ENCODE measurements at regions of chr19 and their contacts with region 1.

Region 1: DNA sequence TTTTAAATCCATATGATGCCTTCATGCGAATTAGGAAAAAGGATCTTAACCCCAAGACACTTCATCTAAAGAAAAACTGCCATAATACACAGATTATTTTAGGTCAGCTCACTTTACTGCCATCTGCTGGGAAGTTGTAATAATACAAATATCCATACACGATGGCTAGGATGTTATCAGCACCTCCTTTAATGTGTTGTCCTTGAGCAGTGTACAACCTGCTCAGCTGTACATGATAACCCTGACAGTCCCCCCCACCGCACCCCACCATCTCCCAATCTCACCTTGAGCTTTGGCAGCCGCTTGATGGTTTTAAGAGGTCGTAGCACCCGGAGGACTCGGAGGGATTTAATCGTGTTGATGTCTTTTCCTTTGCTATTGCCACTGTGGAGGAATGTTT is 112.2 kb downstream of the IER2 start:
- DNase-seq: peak; percentile 76
- ATAC-seq: peak; percentile 22
- H3K4me3 ChIP-seq: no peak overlapping the region
- H3K4me3 Mint-ChIP-seq: no peak overlapping the region
- H3K27ac ChIP-seq: no peak overlapping the region
- H3K27ac Mint-ChIP-seq: peak overlapping the region; percentile 67
- H3K4me1 ChIP-seq: peaks cover 16 to 20% of the 10 kb centered on the region in 2 donors
- H3K4me1 Mint-ChIP-seq: peaks cover 19% of the 10 kb centered on the region
- H3K27me3 ChIP-seq: peaks cover 0 to 7% (median 1%) of the 10 kb centered on the region in 4 experiments
- H3K27me3 Mint-ChIP-seq: peaks cover 15% of the 10 kb centered on the region
- CTCF ChIP-seq: peak; percentile 71

Region 2: DNA sequence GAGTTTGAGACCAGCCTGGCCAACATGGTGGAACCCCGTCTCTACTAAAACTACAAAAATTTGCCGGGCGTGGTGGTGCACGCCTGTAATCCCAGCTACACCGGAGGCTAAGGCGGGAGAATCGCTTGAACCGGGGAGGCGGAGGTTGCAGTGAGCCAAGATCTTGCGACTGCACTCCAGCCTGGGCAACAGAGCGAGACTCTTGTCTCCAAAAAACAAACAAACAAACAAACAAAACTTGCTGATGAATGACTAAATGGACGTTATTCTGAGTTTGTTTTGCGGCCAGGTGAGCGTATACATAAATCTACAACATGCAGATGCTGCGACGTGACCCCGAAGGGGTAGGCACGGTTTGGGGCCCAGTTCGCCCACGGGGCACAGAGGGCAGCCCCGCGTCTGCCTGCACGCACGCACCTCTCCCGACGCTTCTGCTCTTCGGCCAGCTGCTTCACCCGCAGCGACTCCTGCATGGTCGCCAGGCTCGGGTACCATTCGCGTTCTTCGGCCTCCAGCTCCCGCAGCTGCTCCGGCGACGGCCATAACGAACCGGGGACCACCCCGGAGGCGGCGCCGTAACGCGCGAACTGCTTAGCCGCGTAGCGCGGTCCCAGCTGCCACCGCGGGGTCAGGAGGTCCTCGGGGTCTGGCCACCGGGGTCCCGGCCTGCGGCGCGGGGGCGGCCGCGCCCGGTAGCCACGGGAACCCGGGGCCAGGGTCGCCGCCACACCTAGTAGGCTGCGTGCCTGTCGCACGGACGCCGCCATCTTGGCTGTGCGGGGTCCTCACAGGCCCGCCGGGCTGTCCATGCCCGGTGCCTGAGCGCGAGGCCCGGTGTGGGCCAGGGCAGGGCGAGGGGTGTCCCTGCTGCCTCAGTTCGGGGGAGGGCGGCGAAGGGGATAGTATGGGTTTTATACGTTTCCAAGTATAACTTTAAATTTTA is 305.7 kb before region 1 on chr19 and contains the start of gene GADD45GIP1:
- CTCF ChIA-PET with region 1: no interaction called
- POLR2A ChIA-PET with region 1: interaction called, 14 read pairs
- intact Hi-C with region 1: no loop called
- DNase-seq: peak; percentile 86
- ATAC-seq: peak; percentile 98
- H3K4me3 ChIP-seq: peak within 1 kb of the TSS; percentile 60 to 83 (median 65)
- H3K4me3 Mint-ChIP-seq: peak within 1 kb of the TSS; percentile 91
- H3K27ac ChIP-seq: peak within 1 kb of the TSS; percentile 75 to 90
- H3K27ac Mint-ChIP-seq: peak within 1 kb of the TSS; percentile 95
- H3K4me1 ChIP-seq: peaks cover 21 to 36% of the 10 kb centered on the region in 2 donors
- H3K4me1 Mint-ChIP-seq: peaks cover 30% of the 10 kb centered on the region
- H3K27me3 ChIP-seq: no peaks in the 10 kb centered on the region
- H3K27me3 Mint-ChIP-seq: peaks cover 2% of the 10 kb centered on the region
- CTCF ChIP-seq: no peak
- total RNA-seq, gene GADD45GIP1: 11.7 and 12.6 TPM in 2 replicates

Region 3: DNA sequence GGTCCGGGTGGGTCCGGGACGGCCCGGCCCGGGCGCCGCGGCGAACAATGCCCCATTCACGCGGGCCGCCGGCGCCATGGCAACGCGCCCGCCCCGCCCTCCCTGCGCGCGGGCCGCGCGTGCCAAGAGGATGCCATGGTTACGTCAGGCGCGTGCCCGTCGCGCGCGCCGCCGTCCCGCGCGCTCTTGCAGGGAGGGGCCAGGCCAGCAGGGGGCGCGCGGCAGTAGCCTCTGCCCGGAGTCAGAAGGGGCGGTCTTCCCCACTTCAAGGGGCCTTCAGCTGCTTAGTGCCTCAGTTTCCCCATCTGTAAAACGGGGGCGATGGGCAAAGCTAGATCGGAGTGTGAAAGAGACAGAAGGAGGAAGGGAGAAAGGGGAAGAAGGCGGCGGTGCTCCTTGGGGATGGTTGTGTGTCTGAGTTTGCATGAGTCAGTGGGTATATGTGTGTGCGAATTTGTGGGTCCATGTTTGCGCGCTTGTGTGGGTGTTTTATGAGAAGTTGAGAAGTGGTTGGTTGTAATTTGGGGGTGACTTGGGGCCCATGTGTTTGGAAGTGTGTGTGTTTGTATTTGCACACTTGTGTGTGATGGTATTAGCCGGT is 278.8 kb before region 1 on chr19:
- CTCF ChIA-PET with region 1: interaction called, 16 read pairs
- POLR2A ChIA-PET with region 1: no interaction called
- intact Hi-C with region 1: loop called (anchors 1 kb)
- DNase-seq: peak; percentile 93
- ATAC-seq: peak; percentile 77
- H3K4me3 ChIP-seq: peak overlapping the region in 4 of 5 experiments; percentile 24 to 62 (median 36)
- H3K4me3 Mint-ChIP-seq: no peak overlapping the region
- H3K27ac ChIP-seq: no peak overlapping the region
- H3K27ac Mint-ChIP-seq: no peak overlapping the region
- H3K4me1 ChIP-seq: peaks cover 30 to 43% of the 10 kb centered on the region in 2 donors
- H3K4me1 Mint-ChIP-seq: peaks cover 15% of the 10 kb centered on the region
- H3K27me3 ChIP-seq: peaks cover 0 to 10% (median 2%) of the 10 kb centered on the region in 4 experiments
- H3K27me3 Mint-ChIP-seq: peaks cover 4% of the 10 kb centered on the region
- CTCF ChIP-seq: peak; percentile 91

Region 4: GRCh38 chr19:13155472-13156359 is 106.7 kb before region 1 on chr19:
- CTCF ChIA-PET with region 1: interaction called, 31 read pairs
- POLR2A ChIA-PET with region 1: interaction called, 8 read pairs
- intact Hi-C with region 1: loop called (anchors 1 kb)
- DNase-seq: peak; percentile 98
- ATAC-seq: peak; percentile 53
- H3K4me3 ChIP-seq: peak overlapping the region; percentile 82 to 100 (median 98)
- H3K4me3 Mint-ChIP-seq: peak overlapping the region; percentile 92
- H3K27ac ChIP-seq: peak overlapping the region; percentile 94 to 96
- H3K27ac Mint-ChIP-seq: peak overlapping the region; percentile 100
- H3K4me1 ChIP-seq: peaks cover 44 to 62% of the 10 kb centered on the region in 2 donors
- H3K4me1 Mint-ChIP-seq: peaks cover 42% of the 10 kb centered on the region
- H3K27me3 ChIP-seq: no peaks in the 10 kb centered on the region
- H3K27me3 Mint-ChIP-seq: no peaks in the 10 kb centered on the region
- CTCF ChIP-seq: no peak

Region 5: DNA sequence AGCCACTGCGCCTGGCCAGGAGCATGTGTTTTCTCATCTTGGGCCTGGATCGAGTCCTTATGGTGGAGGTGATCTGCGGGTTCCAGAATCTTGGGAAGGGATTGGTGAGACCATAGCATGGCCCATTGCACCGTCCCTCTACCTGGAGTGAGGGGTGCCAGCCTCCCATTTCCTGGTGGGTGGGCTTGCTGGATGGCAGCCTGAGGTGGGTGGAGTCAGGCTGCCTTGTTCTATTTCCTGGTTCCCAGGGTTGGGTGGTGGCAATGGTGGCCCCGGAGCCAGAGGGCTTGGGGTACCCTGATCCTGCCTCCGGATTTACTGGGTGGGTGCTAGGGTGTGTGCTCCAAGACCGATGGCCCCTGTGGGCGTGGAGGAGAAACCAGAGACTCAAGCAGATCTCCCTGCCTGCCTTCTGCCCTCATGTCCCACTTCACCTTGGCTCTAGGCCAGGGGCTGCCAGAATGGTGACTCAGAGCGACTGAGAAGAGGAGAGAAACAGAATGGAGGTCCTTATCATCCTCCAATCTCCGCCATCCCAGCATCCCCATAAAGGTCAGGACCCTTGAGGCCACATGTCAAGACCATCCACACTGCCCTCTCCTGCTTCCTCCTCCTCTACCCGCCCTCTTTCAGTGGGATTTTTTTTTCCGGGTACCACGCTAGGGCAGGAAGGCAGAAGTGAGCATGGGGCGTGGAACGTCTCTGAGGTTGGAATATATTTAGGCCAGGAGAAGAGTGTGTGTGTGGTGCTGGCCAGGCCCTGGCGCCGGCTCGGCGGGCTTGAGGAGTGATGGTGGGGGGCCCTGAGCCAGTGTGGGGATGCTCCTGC is 90.2 kb before region 1 on chr19:
- CTCF ChIA-PET with region 1: interaction called, 13 read pairs
- POLR2A ChIA-PET with region 1: interaction called, 9 read pairs
- intact Hi-C with region 1: no loop called
- DNase-seq: peak; percentile 46
- ATAC-seq: no peak
- H3K4me3 ChIP-seq: peak overlapping the region in 1 of 5 experiments; percentile 12
- H3K4me3 Mint-ChIP-seq: peak overlapping the region; percentile 75
- H3K27ac ChIP-seq: peak overlapping the region; percentile 59 to 72
- H3K27ac Mint-ChIP-seq: peak overlapping the region; percentile 93
- H3K4me1 ChIP-seq: peaks cover 60 to 77% of the 10 kb centered on the region in 2 donors
- H3K4me1 Mint-ChIP-seq: peaks cover 63% of the 10 kb centered on the region
- H3K27me3 ChIP-seq: no peaks in the 10 kb centered on the region
- H3K27me3 Mint-ChIP-seq: no peaks in the 10 kb centered on the region
- CTCF ChIP-seq: no peak

Region 6: GRCh38 chr19:13277104-13277809 is 14.8 kb after region 1 on chr19:
- CTCF ChIA-PET with region 1: interaction called, 14 read pairs
- POLR2A ChIA-PET with region 1: no interaction called
- intact Hi-C with region 1: loop called (anchors 2 kb)
- DNase-seq: peak; percentile 89
- ATAC-seq: peak; percentile 94
- H3K4me3 ChIP-seq: peak overlapping the region in 2 of 5 experiments; percentile 25 to 42
- H3K4me3 Mint-ChIP-seq: peak overlapping the region; percentile 59
- H3K27ac ChIP-seq: peak overlapping the region; percentile 29 to 62
- H3K27ac Mint-ChIP-seq: peak overlapping the region; percentile 87
- H3K4me1 ChIP-seq: peaks cover 6 to 11% of the 10 kb centered on the region in 2 donors
- H3K4me1 Mint-ChIP-seq: peaks cover 17% of the 10 kb centered on the region
- H3K27me3 ChIP-seq: peaks cover 0 to 7% (median under 1%) of the 10 kb centered on the region in 4 experiments
- H3K27me3 Mint-ChIP-seq: peaks cover 17% of the 10 kb centered on the region
- CTCF ChIP-seq: peak; percentile 69